ENCODE measurements at regions of chr5 and their contacts with region 1.

Region 1: DNA sequence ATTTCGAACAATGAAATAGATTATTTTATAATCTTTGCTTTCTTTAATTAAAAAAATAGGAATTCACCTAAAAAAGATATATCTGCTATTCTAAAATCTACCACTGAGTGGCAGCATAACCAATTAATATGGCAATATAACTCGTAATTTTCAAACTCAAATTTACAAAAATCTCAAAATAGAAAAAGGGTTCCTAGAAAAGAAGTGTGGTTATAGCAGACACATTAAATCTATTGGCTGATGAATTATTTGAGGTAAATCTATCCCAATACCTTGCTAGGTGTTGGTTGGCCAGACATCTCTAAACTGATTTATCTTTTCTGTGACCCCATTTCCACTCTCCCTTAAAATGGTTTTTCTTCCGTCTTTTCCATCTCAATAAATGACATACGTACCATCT is 30.2 kb upstream of the NRG2 start:
- DNase-seq: no peak
- H3K4me3 ChIP-seq: no peak overlapping the region
- H3K27ac ChIP-seq: no peak overlapping the region
- H3K4me1 ChIP-seq: no peaks in the 10 kb centered on the region
- H3K27me3 ChIP-seq: no peaks in the 10 kb centered on the region
- CTCF ChIP-seq: peak; percentile 82

Region 2: DNA sequence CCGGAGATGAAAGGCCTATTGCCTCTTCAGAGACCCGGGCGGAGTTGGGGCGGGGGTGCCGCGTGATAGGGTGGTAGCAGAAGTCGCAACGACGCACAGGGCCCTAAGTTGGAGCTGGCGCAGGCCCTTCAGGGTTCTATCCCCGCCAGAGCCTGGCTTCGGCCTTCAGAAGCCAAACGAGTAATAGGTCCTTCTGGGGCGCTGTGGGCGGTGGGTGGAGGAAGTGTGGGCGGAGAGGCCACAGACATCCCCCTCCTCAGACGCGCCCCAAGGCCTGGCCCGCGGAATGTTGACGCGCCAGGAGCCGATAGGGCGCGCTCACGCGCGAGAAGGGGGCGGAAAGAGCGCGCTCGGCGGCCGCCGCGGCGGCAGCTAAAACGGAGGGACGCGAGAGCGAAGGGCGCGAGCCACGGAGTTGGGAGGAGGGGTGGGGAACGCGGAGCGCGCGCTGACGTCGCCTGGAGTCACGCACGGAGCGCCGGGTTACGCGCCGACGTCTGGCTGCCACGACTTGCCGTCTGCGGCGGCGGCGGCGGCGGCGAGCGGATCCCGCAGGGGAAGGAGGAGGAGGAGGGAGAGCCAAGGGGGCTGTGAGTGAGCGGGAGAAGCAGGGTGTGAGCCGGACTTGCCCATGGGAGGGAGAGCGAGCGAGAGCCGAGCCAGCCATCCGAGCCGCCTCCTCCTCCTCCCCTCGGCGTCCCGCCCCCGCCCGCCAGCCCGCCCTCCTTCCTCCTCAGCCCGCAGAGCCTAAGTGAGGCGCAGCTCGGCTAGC is 34.2 kb after region 1 on chr5:
- CTCF ChIA-PET with region 1: interaction called, 10 read pairs
- POLR2A ChIA-PET with region 1: no interaction called
- intact Hi-C with region 1: no loop called
- DNase-seq: peak; percentile 81 to 92
- H3K4me3 ChIP-seq: peak overlapping the region; percentile 99
- H3K27ac ChIP-seq: peak overlapping the region; percentile 72
- H3K4me1 ChIP-seq: peaks cover 28% of the 10 kb centered on the region
- H3K27me3 ChIP-seq: no peaks in the 10 kb centered on the region
- CTCF ChIP-seq: peak; percentile 45; the same call in 1 of the 2 replicates

Region 3: DNA sequence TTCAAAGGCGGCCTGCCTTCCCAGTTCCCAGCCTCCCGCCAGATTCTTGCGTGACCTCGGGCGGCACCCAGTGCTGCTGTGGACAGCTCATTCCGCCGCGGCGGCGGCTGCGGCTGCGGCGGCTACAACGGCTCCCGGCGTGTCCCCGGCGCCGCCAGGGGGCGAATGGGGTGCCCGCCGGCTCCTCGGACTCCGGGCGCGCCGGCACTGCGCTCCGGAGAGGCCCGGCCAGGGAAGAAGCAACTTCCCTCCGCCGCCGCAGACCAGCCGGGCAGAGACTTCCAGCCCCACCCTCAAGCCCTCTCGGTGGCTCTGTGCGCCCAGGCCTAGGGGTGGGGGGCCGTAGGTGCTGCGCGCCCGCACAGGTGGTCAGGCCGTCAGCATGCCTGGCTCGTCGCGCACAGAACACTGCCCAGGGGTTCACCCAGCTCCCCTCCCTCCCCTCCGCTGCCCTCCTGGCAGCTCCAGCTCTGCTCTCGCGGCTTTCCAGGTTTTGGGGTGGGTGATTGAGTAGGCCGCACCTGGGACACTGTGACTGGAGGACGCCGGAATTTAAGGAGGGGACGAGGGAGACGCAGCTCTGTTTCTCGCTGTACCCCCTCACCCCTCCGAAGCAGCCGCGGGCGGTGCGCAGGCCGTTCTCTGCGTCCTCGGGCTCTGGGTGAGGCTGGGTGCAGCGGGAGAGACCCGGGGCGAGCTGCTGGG is 72.7 kb after region 1 on chr5:
- CTCF ChIA-PET with region 1: interaction called, 5 read pairs
- POLR2A ChIA-PET with region 1: no interaction called
- intact Hi-C with region 1: loop called (anchors 1 kb)
- DNase-seq: peak in 1 of 2 experiments; percentile 65
- H3K4me3 ChIP-seq: no peak overlapping the region
- H3K27ac ChIP-seq: no peak overlapping the region
- H3K4me1 ChIP-seq: no peaks in the 10 kb centered on the region
- H3K27me3 ChIP-seq: no peaks in the 10 kb centered on the region
- CTCF ChIP-seq: no peak

Region 4: GRCh38 chr5:140157032-140157803 is 83.9 kb after region 1 on chr5:
- CTCF ChIA-PET with region 1: interaction called, 9 read pairs
- POLR2A ChIA-PET with region 1: no interaction called
- intact Hi-C with region 1: loop called (anchors 1 kb)
- DNase-seq: peak; percentile 58 to 80
- H3K4me3 ChIP-seq: no peak overlapping the region
- H3K27ac ChIP-seq: no peak overlapping the region
- H3K4me1 ChIP-seq: peaks cover 4% of the 10 kb centered on the region
- H3K27me3 ChIP-seq: no peaks in the 10 kb centered on the region
- CTCF ChIP-seq: peak; percentile 95

Region 5: DNA sequence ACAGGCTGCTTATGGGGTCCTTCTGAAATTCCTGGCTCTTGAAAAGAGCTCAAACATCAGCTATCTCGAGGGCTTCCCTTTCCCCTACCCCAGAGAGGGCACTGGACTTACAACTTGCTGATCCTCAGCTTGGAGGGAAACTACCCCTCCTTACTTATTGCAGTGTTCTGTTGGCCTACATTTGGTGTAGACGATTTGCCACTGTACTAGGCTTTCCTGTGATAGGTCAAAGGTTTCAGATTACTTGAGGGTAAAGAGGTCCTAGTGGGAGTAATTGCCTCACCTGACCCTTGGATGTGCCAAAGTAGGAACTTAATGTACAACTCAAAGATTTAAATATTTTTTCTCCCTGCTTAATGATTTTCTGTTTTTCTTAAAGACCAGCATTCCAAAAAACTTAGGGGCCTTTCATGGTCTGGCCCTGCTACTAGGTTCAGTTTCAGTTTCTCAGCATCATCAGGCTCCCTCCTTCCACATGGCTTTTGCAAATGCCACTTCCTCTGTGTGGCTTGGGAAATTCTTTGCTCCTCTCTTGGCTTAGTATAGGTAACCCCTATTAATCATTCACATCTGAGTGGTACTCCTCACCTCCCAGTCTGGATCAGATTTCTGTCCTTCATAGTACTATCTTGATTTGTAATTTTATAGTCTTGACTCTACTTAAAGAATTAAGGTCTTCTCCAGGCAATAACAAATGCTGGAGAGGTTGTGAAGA is 134.1 kb after region 1 on chr5:
- CTCF ChIA-PET with region 1: no interaction called
- POLR2A ChIA-PET with region 1: no interaction called
- intact Hi-C with region 1: no loop called
- DNase-seq: no peak
- H3K4me3 ChIP-seq: no peak overlapping the region
- H3K27ac ChIP-seq: no peak overlapping the region
- H3K4me1 ChIP-seq: no peaks in the 10 kb centered on the region
- H3K27me3 ChIP-seq: no peaks in the 10 kb centered on the region
- CTCF ChIP-seq: no peak

Measured in PC-9 (cell line).